Endothelial cell of umbilical vein (primary cell): ENCODE measurements at regions of chr22 and their contacts with region 1.

Region 1: GRCh38 chr22:36977947-36978660 is 41.1 kb downstream of the TST start:
- DNase-seq: peak; percentile 75
- H3K4me3 ChIP-seq: peak overlapping the region; percentile 3 to 58 (median 32)
- H3K27ac ChIP-seq: no peak overlapping the region
- H3K4me1 ChIP-seq: no peaks in the 10 kb centered on the region
- H3K27me3 ChIP-seq: peaks cover under 1 to 5% of the 10 kb centered on the region in 2 experiments
- CTCF ChIP-seq: peak; percentile 84 to 89
- POLR2A ChIP-seq: no peak

Region 2: GRCh38 chr22:36757668-36758211 is 220.4 kb before region 1 on chr22:
- CTCF ChIA-PET with region 1: interaction called, 10 read pairs
- POLR2A ChIA-PET with region 1: no interaction called
- dilution Hi-C with region 1: no loop called
- intact Hi-C with region 1: loop called (anchors 1 kb)
- DNase-seq: peak; percentile 53
- H3K4me3 ChIP-seq: no peak overlapping the region
- H3K27ac ChIP-seq: no peak overlapping the region
- H3K4me1 ChIP-seq: no peaks in the 10 kb centered on the region
- H3K27me3 ChIP-seq: peaks cover 0 to 4% of the 10 kb centered on the region in 2 experiments
- CTCF ChIP-seq: peak; percentile 82 to 94
- POLR2A ChIP-seq: no peak

Region 3: DNA sequence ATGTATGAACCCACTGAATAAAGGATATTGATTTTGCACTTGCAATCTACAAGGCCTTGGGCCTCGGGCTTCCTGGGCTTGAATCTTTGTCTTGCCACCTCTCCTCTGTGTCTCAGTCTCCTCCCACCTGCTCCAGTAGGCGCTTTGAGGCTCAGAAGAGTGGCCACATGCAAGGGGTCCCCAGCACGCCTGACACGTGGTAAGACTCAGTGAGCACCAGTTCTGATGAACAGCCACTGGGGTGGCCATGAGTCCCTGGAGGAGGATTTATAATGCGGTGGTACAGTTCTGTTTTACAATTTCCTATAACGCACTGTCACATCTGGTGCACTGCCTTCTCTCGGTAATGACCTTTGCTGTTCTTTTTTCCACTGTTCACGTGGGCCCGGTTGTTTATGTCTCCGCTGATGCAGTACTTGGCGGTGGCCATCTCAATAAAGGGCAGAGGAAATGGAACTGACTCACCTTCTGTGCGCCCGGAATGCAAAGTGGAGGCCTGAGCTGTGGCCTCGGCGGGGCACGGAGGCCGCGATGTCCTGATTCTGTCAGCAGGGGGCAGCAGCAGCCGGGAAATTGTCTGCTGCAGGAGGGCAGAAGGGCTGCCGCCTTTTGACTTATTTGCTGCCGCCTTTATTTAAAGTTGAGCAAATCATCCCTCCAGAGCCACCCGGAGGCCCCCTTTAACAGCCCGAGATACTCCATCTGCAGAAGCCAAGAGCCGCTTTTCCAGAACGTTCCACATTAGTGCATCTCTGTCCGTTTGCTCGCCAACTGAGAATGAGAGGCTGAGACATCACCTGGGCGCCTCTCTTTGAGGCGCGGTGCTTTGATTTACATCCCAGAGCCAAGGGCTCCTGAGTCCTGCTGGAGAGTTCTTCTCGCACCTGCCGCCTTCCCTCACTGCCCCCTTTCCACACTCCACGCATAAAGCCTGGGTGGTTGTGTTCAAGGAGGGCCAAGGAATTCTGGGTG is 196.2 kb before region 1 on chr22:
- CTCF ChIA-PET with region 1: interaction called, 32 read pairs
- POLR2A ChIA-PET with region 1: no interaction called
- dilution Hi-C with region 1: no loop called
- intact Hi-C with region 1: loop called (anchors 1 kb)
- DNase-seq: peak; percentile 95
- H3K4me3 ChIP-seq: no peak overlapping the region
- H3K27ac ChIP-seq: peak overlapping the region; percentile 62
- H3K4me1 ChIP-seq: peaks cover 4% of the 10 kb centered on the region
- H3K27me3 ChIP-seq: peaks cover 3 to 8% of the 10 kb centered on the region in 2 experiments
- CTCF ChIP-seq: peak; percentile 93 to 98
- POLR2A ChIP-seq: no peak

Region 4: GRCh38 chr22:36808761-36809224 is 169.3 kb before region 1 on chr22:
- CTCF ChIA-PET with region 1: no interaction called
- POLR2A ChIA-PET with region 1: no interaction called
- dilution Hi-C with region 1: no loop called
- intact Hi-C with region 1: no loop called
- DNase-seq: no peak
- H3K4me3 ChIP-seq: no peak overlapping the region
- H3K27ac ChIP-seq: no peak overlapping the region
- H3K4me1 ChIP-seq: no peaks in the 10 kb centered on the region
- H3K27me3 ChIP-seq: peaks cover 9 to 12% of the 10 kb centered on the region in 2 experiments
- CTCF ChIP-seq: no peak
- POLR2A ChIP-seq: no peak

Region 5: GRCh38 chr22:36873680-36874537 is 104.2 kb before region 1 on chr22:
- CTCF ChIA-PET with region 1: interaction called, 18 read pairs
- POLR2A ChIA-PET with region 1: no interaction called
- dilution Hi-C with region 1: no loop called
- intact Hi-C with region 1: loop called (anchors 1 kb)
- DNase-seq: peak; percentile 82
- H3K4me3 ChIP-seq: no peak overlapping the region
- H3K27ac ChIP-seq: peak overlapping the region; percentile 82
- H3K4me1 ChIP-seq: peaks cover 26% of the 10 kb centered on the region
- H3K27me3 ChIP-seq: peaks cover 0 to 2% of the 10 kb centered on the region in 2 experiments
- CTCF ChIP-seq: peak; percentile 71 to 74
- POLR2A ChIP-seq: no peak

Region 6: GRCh38 chr22:36966851-36967540 is 11.1 kb before region 1 on chr22:
- CTCF ChIA-PET with region 1: interaction called, 14 read pairs
- POLR2A ChIA-PET with region 1: no interaction called
- dilution Hi-C with region 1: no loop called
- intact Hi-C with region 1: no loop called
- DNase-seq: no peak
- H3K4me3 ChIP-seq: no peak overlapping the region
- H3K27ac ChIP-seq: no peak overlapping the region
- H3K4me1 ChIP-seq: no peaks in the 10 kb centered on the region
- H3K27me3 ChIP-seq: peaks cover 5 to 9% of the 10 kb centered on the region in 2 experiments
- CTCF ChIP-seq: no peak
- POLR2A ChIP-seq: no peak

Region 7: GRCh38 chr22:37068859-37069258 is 90.8 kb after region 1 on chr22:
- CTCF ChIA-PET with region 1: no interaction called
- POLR2A ChIA-PET with region 1: no interaction called
- dilution Hi-C with region 1: no loop called
- intact Hi-C with region 1: no loop called
- DNase-seq: no peak
- H3K4me3 ChIP-seq: no peak overlapping the region
- H3K27ac ChIP-seq: no peak overlapping the region
- H3K4me1 ChIP-seq: no peaks in the 10 kb centered on the region
- H3K27me3 ChIP-seq: peaks cover 14 to 15% of the 10 kb centered on the region in 2 experiments
- CTCF ChIP-seq: no peak
- POLR2A ChIP-seq: no peak